ENCODE measurements at regions of chr6 and their contacts with region 1.

Region 1: GRCh38 chr6:20212392-20213217 is at the start of gene MBOAT1:
- DNase-seq: peak; percentile 97
- ATAC-seq: peak; percentile 99
- total RNA-seq, gene MBOAT1: 5.3 TPM

Region 2: GRCh38 chr6:19804205-19805123 is 408.1 kb before region 1 on chr6:
- intact Hi-C with region 1: loop called (anchors 10 kb)
- DNase-seq: peak; percentile 96
- ATAC-seq: peak; percentile 99

Region 3: DNA sequence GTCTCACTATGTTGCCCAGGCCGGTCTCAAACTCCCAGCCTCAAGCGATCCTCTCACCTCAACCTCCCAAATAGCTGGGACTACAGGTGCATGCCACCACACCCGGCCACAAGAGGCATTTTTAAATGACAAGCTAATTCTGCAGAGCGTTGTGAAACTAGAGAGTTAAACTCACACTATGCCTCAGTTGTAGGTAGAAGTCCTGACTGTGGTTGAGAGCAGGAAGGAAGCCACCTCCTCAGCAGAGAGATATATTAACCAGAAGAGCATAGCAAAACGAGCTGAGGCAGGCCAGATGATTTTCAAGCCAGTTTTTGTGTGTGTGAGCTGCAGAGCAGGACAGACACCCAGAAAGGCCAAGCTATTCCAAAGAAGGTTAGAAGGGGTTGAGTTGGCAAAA is 150.7 kb before region 1 on chr6:
- intact Hi-C with region 1: no loop called
- DNase-seq: no peak
- ATAC-seq: no peak

Region 4: DNA sequence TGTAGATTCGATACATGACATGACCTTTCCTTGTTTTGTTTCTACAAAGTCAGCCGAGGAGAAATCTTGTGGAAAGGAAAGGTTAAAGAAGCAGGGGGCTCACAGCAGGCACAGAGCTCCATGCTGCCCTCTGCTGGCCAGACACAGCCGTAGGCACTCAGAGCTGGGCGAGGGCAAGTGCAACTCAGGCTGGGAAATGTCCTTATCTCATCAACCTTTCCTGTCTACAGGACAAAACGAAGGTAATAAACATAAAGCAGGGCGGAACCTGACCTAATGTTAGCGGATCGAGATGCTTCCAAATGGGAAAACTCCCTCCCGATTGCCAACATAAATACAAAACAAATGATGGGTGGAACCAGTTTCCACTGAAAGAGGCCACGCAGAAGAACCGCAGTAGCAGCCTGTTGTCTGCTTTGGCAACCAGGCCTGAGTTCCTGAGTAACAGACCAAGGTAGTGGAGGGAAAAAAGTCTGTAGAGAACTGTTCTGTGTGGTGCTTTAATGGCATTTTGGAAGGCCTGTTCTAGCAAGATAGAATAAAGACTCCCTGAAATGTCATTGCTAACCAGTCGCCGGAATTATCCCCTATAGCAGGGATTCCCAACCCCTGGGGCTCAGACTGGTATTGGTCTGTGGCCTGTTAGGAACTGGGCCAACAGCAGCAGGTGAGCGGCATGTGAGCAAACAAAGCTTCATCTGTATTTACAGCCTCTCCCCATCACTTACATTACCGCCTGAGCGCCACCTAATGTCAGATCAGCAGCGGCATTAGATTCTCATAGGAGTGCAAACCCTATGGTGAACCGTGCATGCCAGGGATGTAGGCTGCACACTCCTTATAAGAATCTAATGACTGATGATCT is 85.6 kb before region 1 on chr6:
- intact Hi-C with region 1: loop called (anchors 1 kb)
- DNase-seq: peak; percentile 84
- ATAC-seq: peak; percentile 86

Region 5: DNA sequence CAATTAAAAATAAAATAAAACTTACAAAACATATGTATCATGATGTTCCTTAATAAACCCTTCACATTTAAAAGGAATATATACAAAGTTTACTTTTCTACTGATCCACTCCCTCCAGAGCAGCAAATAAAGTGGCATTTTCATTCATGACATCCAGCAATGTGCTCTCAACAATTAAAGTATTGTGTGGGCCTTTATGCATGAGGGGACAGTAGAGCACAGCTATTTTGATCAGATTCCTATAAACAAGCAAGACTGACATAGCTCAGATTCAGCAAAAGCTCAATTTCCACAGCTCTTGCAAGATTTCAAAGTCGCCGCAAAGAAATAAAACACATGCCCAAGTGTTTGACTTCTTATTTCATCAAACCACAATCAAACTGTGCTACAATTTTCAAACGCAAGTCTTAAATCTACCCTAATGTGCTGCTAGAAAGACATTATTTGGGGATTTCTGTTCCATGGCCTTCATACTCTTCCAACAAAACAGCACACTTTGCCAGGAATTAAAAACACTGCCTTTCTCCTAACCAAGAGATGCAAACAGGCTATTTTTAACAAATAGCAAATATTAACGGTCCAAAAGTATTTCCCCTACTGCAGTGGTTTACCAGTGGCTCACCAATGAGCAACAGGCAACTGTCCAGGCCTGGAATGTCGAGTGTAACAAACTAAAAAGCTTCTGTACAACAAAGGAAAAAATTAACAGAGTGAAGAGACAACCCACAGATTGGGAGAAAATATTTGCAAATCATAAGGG is 52.6 kb before region 1 on chr6:
- intact Hi-C with region 1: no loop called
- DNase-seq: no peak
- ATAC-seq: no peak

Region 6: DNA sequence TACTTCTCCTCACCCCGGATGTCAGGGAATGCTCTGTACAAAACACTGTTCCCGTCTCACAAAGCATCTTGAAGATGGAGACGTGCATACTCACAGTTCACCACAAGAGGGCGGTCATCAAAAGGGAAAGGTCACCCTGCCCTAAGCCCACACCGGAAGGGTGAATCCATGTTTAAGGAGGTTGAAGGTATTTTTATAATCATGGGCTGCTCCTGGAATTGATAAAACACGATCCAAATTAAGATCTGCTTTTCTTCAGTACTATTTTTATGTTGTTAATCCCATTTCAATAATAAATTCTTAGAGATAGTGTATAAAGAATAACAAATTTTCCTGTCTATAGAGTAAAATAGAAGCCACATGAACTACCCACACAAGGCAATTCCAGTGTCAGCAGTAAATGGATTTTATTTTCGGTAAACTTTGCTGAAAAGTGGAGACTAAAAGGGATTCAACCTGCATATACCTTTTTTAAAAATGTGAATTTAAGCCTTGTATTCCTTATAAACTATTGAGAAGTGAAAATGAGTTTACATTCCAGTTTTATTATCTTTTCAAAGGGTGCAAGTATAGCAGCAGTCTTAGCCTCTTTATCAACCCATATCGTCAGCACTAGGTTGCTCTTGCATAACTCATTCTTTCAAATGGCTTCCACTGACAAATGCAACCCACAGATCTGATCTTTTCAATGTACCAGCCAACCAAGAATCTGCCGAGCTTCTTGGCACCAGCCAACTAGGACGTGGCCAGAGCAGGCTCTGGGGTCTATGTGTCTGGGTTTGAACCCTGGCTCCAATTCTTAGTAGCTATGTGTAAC is 79.4 kb after region 1 on chr6:
- intact Hi-C with region 1: no loop called
- DNase-seq: no peak
- ATAC-seq: peak; percentile 83

Region 7: DNA sequence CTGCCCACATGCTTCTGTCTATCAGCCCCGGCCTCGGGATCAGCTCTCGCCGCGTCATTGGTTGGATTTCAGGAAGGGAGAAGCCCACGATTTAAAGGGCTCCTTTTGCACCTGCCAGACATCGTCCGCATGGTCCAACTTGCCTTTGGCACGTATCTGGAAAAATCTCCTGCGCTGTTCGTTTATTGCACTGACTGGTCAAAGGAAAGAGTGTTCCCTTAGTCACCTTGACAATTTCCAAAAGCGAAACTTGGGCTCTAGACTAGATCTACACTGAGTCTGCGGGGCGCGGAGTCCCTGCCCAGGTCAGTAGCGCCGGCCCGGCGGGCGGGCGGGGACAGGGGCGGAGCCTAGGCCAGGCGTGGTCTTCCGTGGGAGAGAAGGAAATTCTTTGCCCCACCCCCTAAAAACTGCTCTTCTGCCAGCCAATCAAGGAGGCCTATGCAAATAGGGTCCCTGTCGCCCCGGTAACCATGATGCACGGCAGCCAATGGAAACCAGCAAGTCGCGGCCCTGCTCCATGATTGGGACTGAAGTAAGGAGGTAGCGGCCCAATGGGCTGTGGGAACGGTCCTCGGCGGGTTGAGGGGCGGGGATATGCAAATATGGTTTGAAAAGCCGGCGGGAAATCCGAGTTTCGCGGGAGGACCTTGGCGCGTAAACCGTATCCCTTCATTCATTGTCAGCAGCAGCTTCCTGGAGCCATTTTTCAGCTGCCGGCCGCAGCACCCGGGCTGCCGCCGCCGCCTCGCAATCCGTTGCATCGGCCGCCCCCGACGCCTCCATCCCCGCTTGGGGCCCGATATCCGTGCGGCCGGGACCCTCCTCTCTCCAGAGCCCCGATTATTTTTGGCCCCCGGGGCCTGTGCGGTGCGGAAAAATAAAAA is 188.8 kb after region 1 on chr6 and contains the start of gene E2F3:
- intact Hi-C with region 1: loop called (anchors 5 kb)
- DNase-seq: peak; percentile 100
- ATAC-seq: peak; percentile 97
- total RNA-seq, gene E2F3: 6.4 TPM

Region 8: DNA sequence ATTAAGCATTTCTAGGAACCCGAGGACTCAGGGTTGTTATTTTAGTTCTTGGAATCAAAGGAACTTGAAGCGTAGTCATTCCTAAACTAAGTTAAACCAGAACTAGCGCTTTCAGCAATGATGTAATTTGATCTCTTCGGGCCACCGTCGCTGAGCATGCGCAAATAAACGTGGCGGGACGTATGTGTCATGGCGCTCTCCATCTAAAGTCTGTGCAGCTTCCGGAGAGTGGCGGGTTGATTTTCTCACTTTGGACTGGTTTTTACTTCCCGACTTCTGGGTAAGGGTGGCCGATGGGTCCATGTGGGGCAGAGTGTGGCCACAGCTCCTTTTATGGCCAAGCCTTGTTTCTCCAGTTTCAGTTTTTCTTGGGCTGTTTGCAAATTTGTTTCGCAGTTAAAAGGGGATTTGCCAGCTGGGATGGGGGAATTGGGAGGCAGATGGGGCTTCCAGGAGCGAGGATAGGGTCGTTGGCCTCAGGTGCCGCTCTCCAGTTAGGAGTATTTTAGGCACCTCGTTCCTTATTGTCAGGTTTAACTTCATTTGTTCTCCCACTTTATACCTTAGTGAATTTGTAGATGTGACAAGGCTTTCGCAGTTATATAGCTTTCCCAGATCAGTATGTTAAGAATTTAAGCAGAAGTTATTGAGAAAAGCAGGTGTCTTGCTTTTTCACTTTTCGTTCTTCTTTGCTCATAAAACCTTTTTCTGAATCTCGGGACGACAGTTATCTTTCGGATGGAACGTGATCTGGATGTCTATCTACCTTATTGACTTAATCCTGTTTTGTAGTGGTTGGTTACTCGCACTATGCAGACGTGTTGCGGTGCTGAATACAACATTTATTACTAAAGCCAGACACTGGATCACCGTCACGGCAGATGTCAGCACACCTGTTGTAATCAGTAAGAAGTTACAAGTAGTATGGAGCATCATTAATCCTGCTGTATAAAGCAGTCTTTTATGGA is 322.0 kb after region 1 on chr6 and contains the start of gene CDKAL1:
- intact Hi-C with region 1: loop called (anchors 5 kb)
- DNase-seq: peak; percentile 88
- ATAC-seq: peak; percentile 93
- total RNA-seq, gene CDKAL1: 11.6 TPM

Measured in Right ventricle myocardium inferior (tissue), 1 donor.